Activated CD4-positive, alpha-beta T cell treated with anti-CD3 and anti-CD28 coated beads for 36 hours (primary cell): ENCODE measurements at regions of chr14 and their contacts with region 1.

Region 1: DNA sequence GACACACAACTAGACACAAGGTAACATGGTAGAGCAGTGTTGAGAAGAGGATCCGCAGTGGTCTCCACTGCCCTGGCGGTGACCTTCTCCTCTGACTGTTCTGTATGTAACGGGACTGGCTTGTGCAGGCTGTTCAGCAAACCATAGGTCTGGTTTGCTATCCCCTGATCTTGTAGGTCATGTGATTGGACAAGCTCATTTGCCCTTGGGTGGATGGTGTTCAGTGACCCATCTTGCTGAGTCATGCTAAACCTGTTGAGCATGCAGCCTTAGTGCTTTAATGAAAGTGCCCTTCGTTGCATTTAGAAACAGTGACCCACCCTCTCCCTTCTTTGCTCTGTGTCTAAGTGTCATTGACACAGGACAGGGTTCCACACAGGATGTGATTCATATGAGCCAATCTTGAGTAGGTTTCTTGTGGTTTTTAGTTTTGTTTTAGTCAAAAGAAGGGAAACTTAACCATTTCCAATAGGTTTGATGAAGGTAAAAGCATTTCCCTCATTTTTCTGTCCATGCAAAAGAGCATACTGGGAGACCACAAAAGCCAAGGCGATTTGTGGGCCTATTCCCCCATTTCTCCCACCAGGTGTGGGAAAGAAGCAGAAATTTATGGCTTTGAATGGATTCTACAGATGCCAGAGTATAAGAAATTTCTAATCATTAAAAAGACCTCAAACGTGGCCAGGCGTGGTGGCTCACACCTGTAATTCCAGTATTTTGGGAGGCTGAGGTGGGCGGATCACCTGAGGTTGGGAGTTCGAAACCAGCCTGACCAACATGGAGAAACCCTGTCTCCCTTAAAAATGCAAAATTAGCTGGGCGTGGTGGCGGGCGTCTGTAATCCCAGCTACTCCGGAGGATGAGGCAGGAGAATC is 32.6 kb upstream of the HIF1A start:
- DNase-seq: peak; percentile 73
- ATAC-seq: peak; percentile 84
- H3K4me3 Mint-ChIP-seq: peak overlapping the region; percentile 46
- H3K27ac Mint-ChIP-seq: peak overlapping the region; percentile 91
- H3K4me1 Mint-ChIP-seq: peaks cover 67% of the 10 kb centered on the region
- H3K27me3 Mint-ChIP-seq: no peaks in the 10 kb centered on the region

Region 2: GRCh38 chr14:61326847-61327246 is 335.8 kb before region 1 on chr14:
- CTCF ChIA-PET with region 1: interaction called, 4 read pairs
- POLR2A ChIA-PET with region 1: interaction called, 3 read pairs
- intact Hi-C with region 1: loop called in 1 of 2 experiments (anchors 2 kb)
- DNase-seq: no peak
- ATAC-seq: no peak
- H3K4me3 Mint-ChIP-seq: peak overlapping the region; percentile 92
- H3K27ac Mint-ChIP-seq: peak overlapping the region; percentile 94
- H3K4me1 Mint-ChIP-seq: peaks cover 71% of the 10 kb centered on the region
- H3K27me3 Mint-ChIP-seq: no peaks in the 10 kb centered on the region

Region 3: DNA sequence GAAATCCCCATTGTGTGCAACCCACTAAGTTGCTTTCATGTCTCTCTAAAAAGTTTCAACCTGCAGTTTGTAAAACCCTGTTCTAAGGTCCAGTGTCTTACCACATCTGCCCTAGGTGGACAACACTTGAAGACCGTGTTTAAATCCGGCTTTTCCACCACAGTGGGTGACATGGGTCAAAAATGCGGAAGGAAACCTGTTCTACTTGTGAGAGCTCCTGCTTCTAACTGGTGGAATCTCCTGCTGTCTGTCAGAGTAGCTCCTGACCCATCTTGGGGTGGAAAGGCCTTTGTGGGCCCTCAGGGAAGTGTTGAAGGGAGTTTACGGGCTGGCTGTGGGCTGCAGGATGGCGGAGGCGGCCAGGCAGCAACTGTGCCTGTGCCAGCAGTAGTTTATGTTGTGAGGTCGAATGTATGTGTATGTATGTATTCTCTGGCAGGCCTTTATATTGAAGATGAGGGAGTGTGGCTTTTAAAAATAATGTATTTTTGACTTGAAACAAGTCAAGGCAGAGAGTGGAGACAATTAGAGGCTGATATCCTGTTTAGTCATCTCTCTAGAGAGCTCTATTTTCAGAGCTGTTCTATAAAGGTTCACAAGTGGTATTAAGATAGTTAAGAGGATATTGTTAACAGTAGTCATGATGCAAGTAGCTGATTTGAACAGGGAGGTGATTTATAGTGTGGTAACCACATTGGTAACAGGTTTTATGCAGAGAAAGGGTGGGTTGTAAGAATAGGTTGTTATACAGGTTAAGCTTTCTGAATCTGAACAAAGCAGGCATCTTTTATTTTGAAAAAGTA is 274.3 kb before region 1 on chr14:
- CTCF ChIA-PET with region 1: no interaction called
- POLR2A ChIA-PET with region 1: no interaction called
- intact Hi-C with region 1: loop called in 1 of 2 experiments (anchors 5 kb)
- DNase-seq: peak; percentile 71
- ATAC-seq: peak; percentile 81
- H3K4me3 Mint-ChIP-seq: no peak overlapping the region
- H3K27ac Mint-ChIP-seq: no peak overlapping the region
- H3K4me1 Mint-ChIP-seq: no peaks in the 10 kb centered on the region
- H3K27me3 Mint-ChIP-seq: no peaks in the 10 kb centered on the region

Region 4: GRCh38 chr14:61525293-61526011 is 137.2 kb before region 1 on chr14:
- CTCF ChIA-PET with region 1: no interaction called
- POLR2A ChIA-PET with region 1: no interaction called
- intact Hi-C with region 1: loop called (anchors 1 kb)
- DNase-seq: peak; percentile 86
- ATAC-seq: peak; percentile 84
- H3K4me3 Mint-ChIP-seq: peak overlapping the region; percentile 6
- H3K27ac Mint-ChIP-seq: peak overlapping the region; percentile 86
- H3K4me1 Mint-ChIP-seq: peaks cover 87% of the 10 kb centered on the region
- H3K27me3 Mint-ChIP-seq: no peaks in the 10 kb centered on the region

Region 5: DNA sequence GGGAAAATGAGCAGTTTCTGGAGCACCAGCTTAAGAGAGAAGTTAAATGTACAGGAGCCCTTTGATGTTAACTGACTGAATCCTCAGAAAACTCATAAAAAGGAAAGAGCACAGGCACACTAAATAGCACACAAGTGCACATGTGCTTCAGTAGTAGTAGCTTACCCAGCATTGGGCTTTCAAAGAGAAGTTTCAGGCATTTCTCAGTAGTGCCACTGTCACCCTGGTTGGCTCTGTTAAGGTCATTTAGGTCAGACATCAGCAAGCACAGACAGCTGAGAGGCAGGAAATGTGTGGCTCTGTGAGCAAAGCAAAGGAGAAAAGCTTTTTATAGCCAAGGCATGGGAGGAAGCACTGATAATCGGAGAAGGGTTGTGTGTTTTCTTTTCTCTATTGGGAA is 63.7 kb before region 1 on chr14:
- CTCF ChIA-PET with region 1: interaction called, 4 read pairs
- POLR2A ChIA-PET with region 1: no interaction called
- intact Hi-C with region 1: loop called (anchors 1 kb)
- DNase-seq: peak; percentile 47
- ATAC-seq: peak; percentile 49
- H3K4me3 Mint-ChIP-seq: no peak overlapping the region
- H3K27ac Mint-ChIP-seq: peak overlapping the region; percentile 59
- H3K4me1 Mint-ChIP-seq: peaks cover 55% of the 10 kb centered on the region
- H3K27me3 Mint-ChIP-seq: no peaks in the 10 kb centered on the region

Region 6: GRCh38 chr14:61733972-61734371 is 71.3 kb after region 1 on chr14:
- CTCF ChIA-PET with region 1: no interaction called
- POLR2A ChIA-PET with region 1: no interaction called
- intact Hi-C with region 1: no loop called
- DNase-seq: no peak
- ATAC-seq: no peak
- H3K4me3 Mint-ChIP-seq: no peak overlapping the region
- H3K27ac Mint-ChIP-seq: no peak overlapping the region
- H3K4me1 Mint-ChIP-seq: peaks cover 25% of the 10 kb centered on the region
- H3K27me3 Mint-ChIP-seq: no peaks in the 10 kb centered on the region

Region 7: DNA sequence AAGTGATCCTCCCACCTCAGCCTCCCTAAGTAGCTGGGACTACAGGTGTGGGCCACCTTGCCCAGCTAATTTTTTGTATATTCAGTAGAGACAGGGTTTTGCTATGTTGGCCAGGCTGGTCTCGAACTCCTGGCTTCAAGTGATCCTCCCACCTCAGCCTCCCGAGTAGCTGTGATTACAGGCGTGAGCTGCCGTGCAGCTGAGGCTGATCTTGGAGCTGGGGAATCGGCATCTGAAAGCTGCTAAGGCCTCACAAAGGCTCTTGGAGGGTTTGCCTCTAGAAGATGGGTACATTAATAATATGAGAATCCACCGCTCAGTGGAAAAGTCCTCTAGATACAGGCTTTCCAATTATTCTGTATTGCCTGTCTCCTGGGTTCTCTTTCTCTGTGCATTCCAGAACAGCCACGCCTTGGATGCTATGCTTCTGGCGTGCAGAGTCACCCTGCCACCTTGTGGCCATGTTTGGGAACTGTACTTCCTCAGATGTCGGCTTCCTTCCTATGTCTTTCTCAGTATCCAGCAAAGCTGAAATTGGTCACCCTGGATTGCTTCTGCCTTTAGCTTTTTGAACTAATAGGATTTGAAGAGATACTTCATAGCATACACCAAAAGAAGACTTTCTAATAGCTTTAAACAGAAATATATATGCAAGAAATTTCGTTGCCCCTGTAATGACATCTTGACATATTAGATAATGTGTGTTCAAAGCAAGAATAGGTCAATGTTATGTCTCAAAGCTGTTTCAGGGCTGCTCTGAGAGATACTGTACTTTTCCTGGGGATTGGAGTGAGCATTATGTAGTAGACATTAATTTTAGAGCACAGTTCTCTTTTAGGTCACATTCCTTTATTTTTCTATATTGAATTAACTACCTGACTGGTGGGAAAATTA is 174.9 kb after region 1 on chr14:
- CTCF ChIA-PET with region 1: interaction called, 5 read pairs
- POLR2A ChIA-PET with region 1: no interaction called
- intact Hi-C with region 1: loop called in 1 of 2 experiments (anchors 5 kb)
- DNase-seq: peak; percentile 87
- ATAC-seq: peak; percentile 95
- H3K4me3 Mint-ChIP-seq: no peak overlapping the region
- H3K27ac Mint-ChIP-seq: no peak overlapping the region
- H3K4me1 Mint-ChIP-seq: peaks cover 4% of the 10 kb centered on the region
- H3K27me3 Mint-ChIP-seq: no peaks in the 10 kb centered on the region